Caco-2 (cell line): ENCODE measurements at regions of chr6 and their contacts with region 1.

Region 1: GRCh38 chr6:150813319-150813992 is 52.0 kb upstream of the MTHFD1L start:
- DNase-seq: no peak
- H3K4me3 ChIP-seq: no peak overlapping the region
- H3K4me3 Mint-ChIP-seq: no peak overlapping the region
- H3K27ac Mint-ChIP-seq: peak overlapping the region; percentile 45
- H3K4me1 ChIP-seq: no peaks in the 10 kb centered on the region
- H3K4me1 Mint-ChIP-seq: peaks cover 22% of the 10 kb centered on the region
- H3K27me3 ChIP-seq: no peaks in the 10 kb centered on the region
- H3K27me3 Mint-ChIP-seq: no peaks in the 10 kb centered on the region
- CTCF ChIP-seq: no peak

Region 2: GRCh38 chr6:150528648-150529285 is 284.7 kb before region 1 on chr6:
- CTCF ChIA-PET with region 1: no interaction called
- POLR2A ChIA-PET with region 1: no interaction called
- intact Hi-C with region 1: loop called (anchors 10 kb)
- DNase-seq: peak in 1 of 2 experiments; percentile 42
- H3K4me3 ChIP-seq: no peak overlapping the region
- H3K4me3 Mint-ChIP-seq: no peak overlapping the region
- H3K27ac Mint-ChIP-seq: peak overlapping the region; percentile 24
- H3K4me1 ChIP-seq: peaks cover 7% of the 10 kb centered on the region
- H3K4me1 Mint-ChIP-seq: peaks cover 13% of the 10 kb centered on the region
- H3K27me3 ChIP-seq: no peaks in the 10 kb centered on the region
- H3K27me3 Mint-ChIP-seq: no peaks in the 10 kb centered on the region
- CTCF ChIP-seq: no peak

Region 3: DNA sequence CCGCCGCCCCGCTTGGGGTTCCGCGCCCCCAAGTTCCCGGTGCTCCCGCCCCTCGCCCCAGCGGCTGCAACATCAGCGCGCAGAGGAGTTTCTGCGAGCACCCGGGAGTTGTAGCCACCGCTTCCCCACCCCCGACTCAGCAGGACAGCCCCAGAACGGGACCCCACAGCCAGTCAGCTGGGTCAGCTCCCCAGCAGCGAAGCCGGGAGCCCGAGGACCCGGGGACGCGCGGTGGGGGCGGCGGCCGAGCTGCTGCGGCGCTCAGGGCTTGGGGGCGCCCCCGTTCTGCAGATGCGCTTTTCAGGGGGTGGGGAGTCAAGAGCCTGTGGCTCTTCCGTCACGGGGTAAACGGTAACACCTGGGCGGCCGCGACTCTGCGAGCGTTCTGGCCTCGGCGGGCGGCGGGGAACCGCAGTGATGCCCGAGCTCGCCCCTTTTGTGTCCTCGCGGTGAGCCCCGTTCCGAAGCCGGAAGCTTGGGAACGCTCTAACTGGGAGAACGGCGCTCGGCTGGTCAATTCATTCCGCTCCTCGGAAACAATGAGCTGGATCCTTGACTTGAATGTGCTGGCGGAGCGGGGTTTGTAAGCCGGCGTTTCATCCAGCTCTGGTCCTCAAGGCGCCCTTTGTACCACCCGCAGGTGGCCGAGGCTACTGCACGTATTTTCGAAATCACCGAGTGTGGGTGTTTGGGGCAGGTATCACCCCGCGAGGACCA is 213.0 kb before region 1 on chr6:
- CTCF ChIA-PET with region 1: interaction called, 7 read pairs
- POLR2A ChIA-PET with region 1: no interaction called
- intact Hi-C with region 1: loop called (anchors 1 kb)
- DNase-seq: peak; percentile 84 to 85
- H3K4me3 ChIP-seq: peak overlapping the region; percentile 61
- H3K4me3 Mint-ChIP-seq: peak overlapping the region; percentile 88
- H3K27ac Mint-ChIP-seq: peak overlapping the region; percentile 64
- H3K4me1 ChIP-seq: peaks cover 11% of the 10 kb centered on the region; the same call in 1 of the 2 replicates
- H3K4me1 Mint-ChIP-seq: peaks cover 18% of the 10 kb centered on the region
- H3K27me3 ChIP-seq: no peaks in the 10 kb centered on the region
- H3K27me3 Mint-ChIP-seq: no peaks in the 10 kb centered on the region
- CTCF ChIP-seq: peak; percentile 68 to 73

Region 4: DNA sequence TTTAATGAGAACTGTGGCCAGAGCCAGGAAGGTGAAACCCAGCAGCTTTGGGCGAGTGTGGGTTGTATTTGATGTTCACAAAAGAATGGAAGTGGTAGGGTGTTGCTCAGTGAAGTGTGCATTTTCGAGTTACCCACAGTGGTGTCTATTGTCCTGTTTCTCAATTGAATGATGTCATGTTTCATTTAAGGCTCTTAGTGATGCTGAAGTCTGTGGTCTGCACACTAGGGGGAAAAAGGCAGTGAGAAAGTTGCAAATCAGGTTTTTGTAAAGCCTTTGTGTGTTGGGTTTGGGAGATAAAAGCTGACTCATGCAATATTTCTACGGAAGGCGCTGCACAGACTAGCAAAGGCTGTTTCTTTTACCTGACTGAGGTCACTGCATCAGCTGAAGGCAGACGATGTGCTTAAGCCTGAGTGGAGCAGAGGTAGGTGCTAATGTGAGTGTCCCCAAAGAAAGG is 92.7 kb before region 1 on chr6:
- CTCF ChIA-PET with region 1: no interaction called
- POLR2A ChIA-PET with region 1: no interaction called
- intact Hi-C with region 1: no loop called
- DNase-seq: peak; percentile 71 to 76
- H3K4me3 ChIP-seq: peak overlapping the region; percentile 12; the same call in 1 of the 2 replicates
- H3K4me3 Mint-ChIP-seq: peak overlapping the region; percentile 74
- H3K27ac Mint-ChIP-seq: peak overlapping the region; percentile 94
- H3K4me1 ChIP-seq: peaks cover 30% of the 10 kb centered on the region
- H3K4me1 Mint-ChIP-seq: peaks cover 39% of the 10 kb centered on the region
- H3K27me3 ChIP-seq: no peaks in the 10 kb centered on the region
- H3K27me3 Mint-ChIP-seq: no peaks in the 10 kb centered on the region
- CTCF ChIP-seq: peak; percentile 28 to 40

Region 5: DNA sequence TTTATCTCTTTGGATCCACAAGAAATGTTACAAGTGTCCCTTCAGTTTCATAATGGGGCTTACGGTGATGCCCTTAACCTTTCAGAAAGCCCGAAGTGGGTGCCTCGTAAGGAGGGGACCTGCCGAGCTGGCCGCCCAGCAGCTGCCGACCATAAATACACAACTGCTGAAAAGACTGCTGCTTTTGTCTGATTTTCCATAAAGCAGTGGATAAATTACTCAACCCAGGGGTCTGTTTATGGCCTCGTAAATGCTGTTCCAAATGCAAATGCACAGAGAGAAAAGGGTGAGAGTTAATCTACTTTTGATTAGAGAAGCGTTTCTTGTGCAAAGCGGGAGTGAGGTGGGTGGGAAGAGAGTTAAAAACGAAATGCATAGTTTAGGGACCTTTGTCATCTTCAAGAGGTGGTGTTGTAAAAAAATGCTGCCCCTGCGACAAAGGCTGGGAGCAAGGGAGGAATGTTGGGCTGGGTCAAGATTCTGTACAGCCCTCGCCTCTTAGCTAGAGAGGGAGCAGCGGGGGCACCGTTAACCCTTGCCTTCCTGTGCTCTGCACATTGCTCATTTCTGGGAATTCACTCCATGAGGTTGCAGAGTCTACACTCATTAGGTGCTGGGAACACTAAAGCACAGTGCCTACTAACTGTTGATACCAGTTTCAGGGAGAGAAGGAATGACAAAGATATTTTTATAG is 59.9 kb before region 1 on chr6:
- CTCF ChIA-PET with region 1: no interaction called
- POLR2A ChIA-PET with region 1: no interaction called
- intact Hi-C with region 1: no loop called
- DNase-seq: peak; percentile 60 to 69
- H3K4me3 ChIP-seq: peak overlapping the region; percentile 32
- H3K4me3 Mint-ChIP-seq: peak overlapping the region; percentile 73
- H3K27ac Mint-ChIP-seq: peak overlapping the region; percentile 86
- H3K4me1 ChIP-seq: peaks cover 22% of the 10 kb centered on the region
- H3K4me1 Mint-ChIP-seq: peaks cover 18% of the 10 kb centered on the region
- H3K27me3 ChIP-seq: no peaks in the 10 kb centered on the region
- H3K27me3 Mint-ChIP-seq: no peaks in the 10 kb centered on the region
- CTCF ChIP-seq: no peak

Region 6: DNA sequence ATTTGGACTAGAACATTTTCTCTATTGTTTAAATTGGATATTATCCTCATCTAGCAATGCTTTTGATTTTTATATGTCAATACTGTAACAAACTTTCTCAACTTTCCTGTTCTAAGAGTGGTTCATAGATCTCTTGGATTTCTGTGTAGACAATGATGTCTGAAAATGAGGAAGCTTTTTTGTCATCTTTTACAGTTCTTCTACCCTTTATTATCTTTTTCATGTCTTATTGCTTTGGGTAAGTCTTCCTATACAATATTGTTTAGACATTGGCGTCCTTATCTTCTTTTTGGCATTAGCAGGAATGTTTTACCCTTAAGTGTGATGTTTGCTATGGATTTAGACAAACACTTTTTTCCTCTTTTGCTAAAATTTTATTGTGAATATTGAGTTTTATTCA is 39.5 kb before region 1 on chr6:
- CTCF ChIA-PET with region 1: no interaction called
- POLR2A ChIA-PET with region 1: no interaction called
- intact Hi-C with region 1: no loop called
- DNase-seq: no peak
- H3K4me3 ChIP-seq: no peak overlapping the region
- H3K4me3 Mint-ChIP-seq: no peak overlapping the region
- H3K27ac Mint-ChIP-seq: no peak overlapping the region
- H3K4me1 ChIP-seq: no peaks in the 10 kb centered on the region
- H3K4me1 Mint-ChIP-seq: no peaks in the 10 kb centered on the region
- H3K27me3 ChIP-seq: no peaks in the 10 kb centered on the region
- H3K27me3 Mint-ChIP-seq: no peaks in the 10 kb centered on the region
- CTCF ChIP-seq: no peak

Region 7: GRCh38 chr6:150881911-150882481 is 68.5 kb after region 1 on chr6:
- CTCF ChIA-PET with region 1: interaction called, 12 read pairs
- POLR2A ChIA-PET with region 1: no interaction called
- intact Hi-C with region 1: no loop called
- DNase-seq: peak; percentile 76 to 85
- H3K4me3 ChIP-seq: no peak overlapping the region
- H3K4me3 Mint-ChIP-seq: no peak overlapping the region
- H3K27ac Mint-ChIP-seq: peak overlapping the region; percentile 57
- H3K4me1 ChIP-seq: peaks cover 18% of the 10 kb centered on the region
- H3K4me1 Mint-ChIP-seq: peaks cover 16% of the 10 kb centered on the region
- H3K27me3 ChIP-seq: no peaks in the 10 kb centered on the region
- H3K27me3 Mint-ChIP-seq: no peaks in the 10 kb centered on the region
- CTCF ChIP-seq: no peak